OCI-LY7 (cell line): ENCODE measurements at regions of chr2 and their contacts with region 1.

Region 1: DNA sequence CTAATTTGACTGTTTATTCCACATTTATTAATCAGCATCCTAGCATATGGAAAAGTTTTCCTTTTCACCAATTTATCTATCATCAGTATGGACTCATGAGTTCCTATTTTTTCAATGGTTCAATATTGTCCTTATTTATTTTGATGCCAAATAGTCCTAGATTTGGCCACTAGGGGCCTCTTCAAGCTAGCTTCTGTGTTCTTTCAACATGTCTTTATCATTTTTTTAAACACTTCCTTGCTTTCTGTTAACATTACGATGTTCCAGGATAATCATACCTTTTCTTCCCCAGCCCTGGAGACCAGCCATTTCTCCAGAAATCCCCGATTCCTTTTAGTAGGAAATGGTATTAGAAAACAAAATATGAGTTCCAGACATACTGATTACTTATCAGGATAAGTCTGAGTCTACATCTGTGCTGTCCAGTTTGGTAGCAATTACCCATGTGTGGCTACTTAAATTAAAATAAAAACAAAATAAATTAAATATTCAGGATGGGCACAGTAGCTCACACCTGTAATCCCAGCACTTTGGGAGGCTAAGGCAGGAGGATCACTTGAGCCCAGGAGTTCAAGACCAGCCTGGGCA is 70.6 kb downstream of the RPE start:
- DNase-seq: peak; percentile 58
- H3K4me3 ChIP-seq: no peak overlapping the region
- H3K27ac ChIP-seq: no peak overlapping the region
- H3K4me1 ChIP-seq: no peaks in the 10 kb centered on the region
- CTCF ChIP-seq: peak; percentile 90

Region 2: GRCh38 chr2:209534228-209534627 is 538.8 kb before region 1 on chr2:
- CTCF ChIA-PET with region 1: no interaction called
- POLR2A ChIA-PET with region 1: no interaction called
- intact Hi-C with region 1: no loop called
- DNase-seq: no peak
- H3K4me3 ChIP-seq: no peak overlapping the region
- H3K27ac ChIP-seq: no peak overlapping the region
- H3K4me1 ChIP-seq: no peaks in the 10 kb centered on the region
- CTCF ChIP-seq: no peak

Region 3: GRCh38 chr2:209977386-209978239 is 95.4 kb before region 1 on chr2:
- CTCF ChIA-PET with region 1: no interaction called
- POLR2A ChIA-PET with region 1: interaction called, 4 read pairs
- intact Hi-C with region 1: loop called (anchors 5 kb)
- DNase-seq: peak; percentile 50
- H3K4me3 ChIP-seq: no peak overlapping the region
- H3K27ac ChIP-seq: no peak overlapping the region
- H3K4me1 ChIP-seq: no peaks in the 10 kb centered on the region
- CTCF ChIP-seq: peak; percentile 82